CD8-positive, alpha-beta memory T cell (primary cell): ENCODE measurements at regions of chr3 and their contacts with region 1.

Region 1: DNA sequence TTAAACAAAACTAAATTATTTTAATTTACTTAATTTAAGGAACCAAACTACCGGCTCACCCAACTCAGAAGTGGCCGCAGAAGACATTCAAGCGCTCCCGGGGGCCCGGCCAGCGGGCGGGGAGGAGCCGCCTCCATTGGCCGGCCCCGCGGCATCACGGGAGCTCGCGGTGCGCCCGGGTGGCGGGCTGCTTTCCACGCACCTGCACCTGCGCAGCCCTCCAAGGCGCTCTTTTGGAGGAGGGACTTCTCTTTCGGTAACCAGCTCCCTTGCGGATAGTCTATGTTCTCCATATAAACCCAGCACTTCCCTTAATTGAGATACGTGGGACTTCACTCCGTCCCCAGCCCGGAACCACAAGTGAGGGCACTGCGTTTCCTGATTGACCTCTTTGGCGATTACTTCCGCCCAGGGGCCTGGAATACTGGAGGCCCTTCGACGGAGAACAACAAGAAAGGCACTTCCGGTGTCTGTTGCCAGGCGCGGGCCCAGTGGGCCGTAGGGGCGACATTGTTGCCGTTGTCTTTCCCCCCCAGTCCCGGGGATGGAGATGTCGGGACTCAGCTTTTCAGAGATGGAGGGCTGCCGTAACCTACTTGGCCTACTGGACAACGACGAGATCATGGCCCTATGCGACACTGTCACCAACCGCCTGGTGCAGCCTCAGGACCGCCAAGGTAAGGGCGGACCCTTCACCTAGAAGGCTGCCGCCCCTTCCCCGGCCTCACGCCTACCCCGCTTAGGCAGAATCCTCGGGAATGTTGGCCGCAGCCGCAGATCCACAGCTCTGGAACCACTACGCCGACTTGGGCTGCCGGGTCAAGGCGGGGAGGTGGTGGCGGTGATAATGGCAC is at the start of gene C3orf38:
- DNase-seq: peak; percentile 72 to 89 (median 82)
- H3K4me3 ChIP-seq: peak within 1 kb of the TSS; percentile 98
- H3K4me3 Mint-ChIP-seq: peak within 1 kb of the TSS; percentile 94 to 100 (median 98)
- H3K27ac ChIP-seq: peak within 1 kb of the TSS; percentile 93
- H3K27ac Mint-ChIP-seq: peak within 1 kb of the TSS; percentile 97 to 99 (median 98)
- H3K4me1 ChIP-seq: peaks cover 27% of the 10 kb centered on the region
- H3K4me1 Mint-ChIP-seq: peaks cover 38 to 44% (median 39%) of the 10 kb centered on the region in 3 donors
- H3K27me3 ChIP-seq: no peaks in the 10 kb centered on the region
- H3K27me3 Mint-ChIP-seq: no peaks in the 10 kb centered on the region
- total RNA-seq, gene C3orf38: 25.9 to 28.2 TPM

Region 2: DNA sequence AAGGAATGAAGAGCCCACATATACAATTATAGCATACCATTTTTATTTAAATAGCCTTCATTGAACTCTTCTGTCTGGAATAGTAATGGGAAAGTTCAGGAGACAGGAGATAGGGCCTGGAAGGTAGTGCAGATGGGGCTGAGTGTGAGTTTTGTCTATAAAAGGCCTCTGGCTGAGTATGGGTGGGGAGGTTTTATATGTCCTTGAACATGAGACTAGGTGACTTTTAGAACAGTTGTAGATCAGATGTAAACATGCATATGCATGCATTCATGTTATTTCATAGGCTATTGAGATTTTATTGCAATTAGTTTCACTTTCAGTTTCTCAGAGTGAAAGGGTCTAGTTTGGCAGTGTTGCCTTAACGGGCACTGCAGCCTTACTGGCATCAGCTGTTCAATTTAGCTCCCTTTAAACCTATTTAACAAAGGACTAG is 118.1 kb before region 1 on chr3:
- CTCF ChIA-PET with region 1: interaction called, 3 read pairs
- POLR2A ChIA-PET with region 1: interaction called, 14 read pairs
- DNase-seq: peak; percentile 5 to 53 (median 45)
- H3K4me3 ChIP-seq: peak overlapping the region; percentile 38
- H3K4me3 Mint-ChIP-seq: peak overlapping the region; percentile 80 to 89 (median 86)
- H3K27ac ChIP-seq: peak overlapping the region; percentile 47
- H3K27ac Mint-ChIP-seq: peak overlapping the region; percentile 76 to 97 (median 94)
- H3K4me1 ChIP-seq: peaks cover 22% of the 10 kb centered on the region
- H3K4me1 Mint-ChIP-seq: peaks cover 24 to 38% (median 36%) of the 10 kb centered on the region in 3 donors
- H3K27me3 ChIP-seq: no peaks in the 10 kb centered on the region
- H3K27me3 Mint-ChIP-seq: peaks cover 0 to under 1% of the 10 kb centered on the region in 2 donors